AG04449 (cell line): ENCODE measurements at regions of chrX and their contacts with region 1.

Region 1: GRCh38 chrX:12946838-12947544 is 27.9 kb upstream of the TMSB4X start:
- DNase-seq: peak; percentile 47
- H3K4me3 ChIP-seq: no peak overlapping the region
- CTCF ChIP-seq: peak; percentile 89

Region 2: DNA sequence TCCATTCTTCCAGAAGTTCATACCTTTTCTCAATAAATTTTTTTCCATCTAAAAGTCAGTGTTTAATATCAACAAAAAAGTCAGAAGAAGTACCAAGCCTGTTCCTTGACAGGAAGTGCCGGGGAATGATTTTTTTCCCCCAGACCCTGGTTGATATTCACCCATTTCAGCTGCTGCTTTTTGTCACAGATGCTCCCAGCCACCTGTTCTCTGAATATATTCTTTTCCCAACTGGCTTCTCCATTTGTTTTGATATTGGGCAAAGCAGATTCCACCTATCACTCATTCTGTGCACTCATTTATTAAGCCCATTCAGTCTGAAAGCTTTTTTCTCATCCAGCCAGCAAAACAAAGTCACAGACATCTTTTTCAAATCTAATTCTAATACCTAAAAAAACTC is 668.8 kb before region 1 on chrX:
- CTCF ChIA-PET with region 1: no interaction called
- POLR2A ChIA-PET with region 1: no interaction called
- DNase-seq: no peak
- H3K4me3 ChIP-seq: no peak overlapping the region
- CTCF ChIP-seq: no peak

Region 3: GRCh38 chrX:13487731-13488523 is 540.9 kb after region 1 on chrX:
- CTCF ChIA-PET with region 1: interaction called, 24 read pairs
- POLR2A ChIA-PET with region 1: interaction called, 6 read pairs
- DNase-seq: peak; percentile 80
- H3K4me3 ChIP-seq: no peak overlapping the region
- CTCF ChIP-seq: peak; percentile 26